ENCODE measurements at regions of chr14 and their contacts with region 1.

Region 1: DNA sequence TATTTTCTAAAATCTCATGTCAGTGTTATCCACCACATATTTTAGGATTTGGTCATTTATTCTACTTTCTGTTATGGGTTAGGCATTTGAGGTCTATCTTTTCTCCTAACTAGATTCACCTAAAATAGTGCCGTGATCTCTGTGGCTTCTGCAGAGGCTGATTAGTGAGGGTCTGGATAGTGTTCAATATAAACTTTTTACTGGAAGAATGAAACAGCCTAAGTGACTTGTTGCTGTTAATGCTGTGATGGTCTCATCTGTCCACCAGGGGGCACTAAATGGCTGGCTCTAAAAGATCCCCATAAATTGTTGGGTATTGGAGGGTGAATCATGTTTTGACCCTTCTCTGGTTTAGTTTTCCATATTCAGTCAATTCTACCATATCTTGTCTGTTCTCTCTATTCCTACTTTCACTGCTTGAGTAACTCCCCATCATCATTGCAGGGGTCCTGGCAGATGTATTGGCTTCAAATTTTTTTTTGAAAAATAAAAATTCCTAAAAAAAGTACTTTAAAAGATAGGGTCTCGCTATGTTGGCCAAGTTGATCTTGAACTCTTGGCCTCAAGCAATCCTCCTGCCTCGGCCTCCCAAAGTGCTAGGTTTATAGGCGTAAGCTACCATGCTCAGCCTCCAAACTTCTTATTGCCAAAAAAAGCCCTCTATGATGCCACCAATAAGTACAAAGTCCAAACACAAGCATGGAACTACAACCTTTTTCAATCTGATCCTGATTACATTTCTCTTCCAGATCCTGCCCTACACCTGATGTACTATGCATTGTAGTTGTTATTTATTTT is 6.9 kb downstream of the PABPN1 start:
- DNase-seq: peak; percentile 38 to 59
- ATAC-seq: peak; percentile 57 to 90
- H3K4me3 ChIP-seq: no peak overlapping the region
- H3K27ac ChIP-seq: no peak overlapping the region
- H3K4me1 ChIP-seq: peaks cover 2 to 7% of the 10 kb centered on the region in 2 donors
- H3K27me3 ChIP-seq: no peaks in the 10 kb centered on the region
- CTCF ChIP-seq: peak; percentile 79 to 85 (median 81)
- POLR2A ChIP-seq: no peak

Region 2: GRCh38 chr14:23269193-23269592 is 59.0 kb before region 1 on chr14:
- in situ Hi-C with region 1: no loop called
- intact Hi-C with region 1: loop called (anchors 5 kb)
- DNase-seq: no peak
- ATAC-seq: no peak
- H3K4me3 ChIP-seq: no peak overlapping the region
- H3K27ac ChIP-seq: no peak overlapping the region
- H3K4me1 ChIP-seq: no peaks in the 10 kb centered on the region
- H3K27me3 ChIP-seq: no peaks in the 10 kb centered on the region
- CTCF ChIP-seq: no peak
- POLR2A ChIP-seq: no peak

Region 3: GRCh38 chr14:23301288-23301968 is 26.7 kb before region 1 on chr14:
- in situ Hi-C with region 1: no loop called
- intact Hi-C with region 1: no loop called
- DNase-seq: peak; percentile 97 to 98
- ATAC-seq: peak; percentile 73 to 78
- H3K4me3 ChIP-seq: peak overlapping the region; percentile 72 to 87 (median 82)
- H3K27ac ChIP-seq: peak overlapping the region; percentile 96 to 99 (median 98)
- H3K4me1 ChIP-seq: peaks cover 30 to 32% of the 10 kb centered on the region in 2 donors
- H3K27me3 ChIP-seq: no peaks in the 10 kb centered on the region
- CTCF ChIP-seq: peak; percentile 60 to 94 (median 79)
- POLR2A ChIP-seq: peak; percentile 84 to 88

Region 4: DNA sequence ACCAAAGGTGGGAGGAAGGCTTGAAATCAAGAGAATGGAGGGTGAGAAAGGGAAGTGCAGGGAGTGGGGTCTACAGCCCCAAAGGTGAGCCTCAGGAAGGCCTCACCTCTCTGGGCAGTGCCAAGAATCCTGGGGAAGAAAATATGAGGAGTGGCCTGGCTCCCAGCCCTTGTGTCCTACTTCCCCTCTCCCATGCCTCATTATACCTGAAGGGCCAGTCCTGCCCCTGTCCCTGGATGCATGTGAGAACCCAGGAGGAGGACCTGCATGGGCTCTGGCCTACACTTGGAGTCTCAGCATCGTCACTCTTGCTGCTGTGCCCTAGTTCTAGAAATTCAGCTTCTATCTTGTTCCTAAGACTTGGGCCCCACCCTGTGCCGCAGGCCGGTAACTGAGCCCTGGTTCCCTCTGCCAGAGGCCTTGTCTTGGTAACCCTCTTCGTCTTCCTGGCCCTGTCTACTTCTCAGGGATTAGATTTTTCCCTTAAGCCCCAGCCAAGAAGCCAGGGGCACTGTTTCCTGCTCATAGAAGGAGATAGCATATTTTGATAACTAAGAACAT is 118.2 kb after region 1 on chr14:
- in situ Hi-C with region 1: loop called in 1 of 4 experiments (anchors 5 kb)
- intact Hi-C with region 1: loop called (anchors 2 kb)
- DNase-seq: peak; percentile 47 to 80
- ATAC-seq: peak; percentile 64 to 70
- H3K4me3 ChIP-seq: no peak overlapping the region
- H3K27ac ChIP-seq: peak overlapping the region; percentile 83 to 89 (median 86)
- H3K4me1 ChIP-seq: peaks cover 25 to 42% of the 10 kb centered on the region in 2 donors
- H3K27me3 ChIP-seq: no peaks in the 10 kb centered on the region
- CTCF ChIP-seq: peak in 2 of 5 experiments; percentile 46 to 54
- POLR2A ChIP-seq: no peak